ENCODE measurements at regions of chr12 and their contacts with region 1.

Region 1: DNA sequence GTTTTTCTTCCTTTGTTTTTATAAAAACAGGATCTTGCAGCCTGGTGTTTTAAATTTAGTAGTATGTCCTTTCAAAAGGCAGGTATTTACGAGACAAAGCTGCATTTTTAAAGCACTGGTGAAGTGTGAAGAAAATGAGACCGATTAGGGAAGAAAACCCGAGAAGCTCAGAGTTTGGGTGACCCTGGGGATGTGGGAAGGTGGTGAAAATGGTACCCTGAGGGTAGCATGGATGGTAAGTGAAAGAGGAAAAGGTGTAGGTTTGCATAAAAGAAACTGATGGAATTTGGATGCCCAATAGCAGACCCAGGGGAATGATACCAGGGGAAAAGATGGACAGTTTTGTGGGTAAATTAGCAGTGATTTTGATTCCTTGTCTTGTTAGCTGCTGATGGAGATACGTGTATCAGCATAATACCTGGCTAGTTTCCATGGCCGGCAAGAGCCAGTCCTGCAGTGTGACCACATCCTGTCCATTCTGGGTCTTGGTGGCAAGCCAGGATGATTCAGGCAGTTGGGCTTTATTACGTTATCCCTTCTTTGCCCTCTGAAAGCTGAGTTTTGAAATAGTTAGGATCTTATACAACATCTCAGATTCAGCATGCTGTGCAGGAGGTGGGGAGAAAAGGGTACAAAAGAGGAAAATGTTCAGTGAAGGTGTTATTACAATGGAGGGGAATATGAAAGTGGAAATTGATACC is 8.9 kb downstream of the BICD1 start:
- DNase-seq: peak; percentile 91 to 93
- H3K4me3 ChIP-seq: no peak overlapping the region
- H3K27ac ChIP-seq: peak overlapping the region; percentile 83
- H3K4me1 ChIP-seq: peaks cover 33% of the 10 kb centered on the region
- H3K27me3 ChIP-seq: no peaks in the 10 kb centered on the region
- CTCF ChIP-seq: no peak

Region 2: DNA sequence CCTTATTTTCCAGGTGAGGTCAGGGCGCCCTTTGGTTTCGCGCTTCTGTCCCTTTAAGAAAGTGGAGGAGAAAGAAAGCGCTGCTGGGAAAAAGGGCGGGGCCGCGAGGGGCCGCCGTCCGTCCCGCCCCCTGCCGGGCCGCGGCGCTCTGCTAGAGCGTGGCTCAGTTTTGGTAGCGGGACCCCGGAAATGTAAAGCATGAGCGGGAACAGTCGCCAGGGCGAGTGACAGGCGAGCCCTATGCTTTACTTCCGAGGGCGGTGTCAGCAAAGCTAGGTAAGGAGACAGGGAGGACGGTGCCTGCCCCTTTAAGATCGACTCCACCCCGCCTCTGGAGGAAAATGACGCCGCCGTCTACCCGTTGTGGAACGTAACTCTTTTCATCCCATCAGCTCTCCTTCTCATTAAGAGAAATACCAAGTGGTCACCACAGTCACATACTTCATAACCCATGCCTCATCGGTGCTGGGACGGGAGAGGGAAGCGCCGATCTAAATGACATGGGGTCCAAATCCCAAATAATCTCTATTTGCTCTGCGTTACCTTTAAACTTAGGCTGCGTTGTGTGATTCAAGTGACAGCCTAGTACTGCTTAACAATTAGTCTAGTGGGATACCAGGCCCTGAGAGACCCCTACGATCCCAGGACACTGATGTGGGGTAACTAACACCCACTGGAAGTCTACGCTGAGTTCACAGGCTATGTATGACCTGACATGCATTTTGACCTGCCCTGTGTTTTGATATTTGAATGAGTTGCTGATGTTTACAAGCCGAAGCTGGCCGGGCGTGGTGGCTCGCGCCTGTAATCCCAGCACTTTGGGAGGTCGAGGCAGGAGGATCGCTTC is 456.2 kb before region 1 on chr12 and contains the start of gene ETFBKMT:
- CTCF ChIA-PET with region 1: no interaction called
- POLR2A ChIA-PET with region 1: no interaction called
- intact Hi-C with region 1: loop called (anchors 2 kb)
- DNase-seq: peak; percentile 94 to 97
- H3K4me3 ChIP-seq: peak within 1 kb of the TSS; percentile 62
- H3K27ac ChIP-seq: peak within 1 kb of the TSS; percentile 63
- H3K4me1 ChIP-seq: peaks cover 17% of the 10 kb centered on the region
- H3K27me3 ChIP-seq: no peaks in the 10 kb centered on the region
- CTCF ChIP-seq: peak; percentile 60
- total RNA-seq, gene ETFBKMT: 2.2 and 2.4 TPM in 2 replicates

Region 3: GRCh38 chr12:32242641-32243040 is 127.1 kb after region 1 on chr12:
- CTCF ChIA-PET with region 1: no interaction called
- POLR2A ChIA-PET with region 1: interaction called, 10 read pairs
- intact Hi-C with region 1: no loop called
- DNase-seq: no peak
- H3K4me3 ChIP-seq: no peak overlapping the region
- H3K27ac ChIP-seq: no peak overlapping the region
- H3K4me1 ChIP-seq: no peaks in the 10 kb centered on the region
- H3K27me3 ChIP-seq: no peaks in the 10 kb centered on the region
- CTCF ChIP-seq: no peak

Measured in PC-9 (cell line).